ENCODE measurements at regions of chr1 and their contacts with region 1.

Region 1: GRCh38 chr1:77533660-77534305 is 148.7 kb downstream of the ZZZ3 start:
- DNase-seq: peak in 7 of 10 donors; percentile 18 to 70 (median 63)
- H3K4me3 ChIP-seq: peak overlapping the region in 9 of 59 donors; percentile 0 to 30 (median 11)
- H3K27ac ChIP-seq: peak overlapping the region; percentile 1 to 94 (median 81)
- H3K27me3 ChIP-seq: no peaks in the 10 kb centered on the region
- CTCF ChIP-seq: peak; percentile 81 to 98 (median 90)

Region 2: GRCh38 chr1:77219166-77219887 is 314.5 kb before region 1 on chr1 and contains the start of gene PIGK:
- intact Hi-C with region 1: loop called in 1 of 2 experiments (anchors 5 kb)
- DNase-seq: peak; percentile 75 to 90 (median 86)
- H3K4me3 ChIP-seq: peak within 1 kb of the TSS; percentile 54 to 97 (median 84)
- H3K27ac ChIP-seq: peak within 1 kb of the TSS; percentile 26 to 97 (median 89)
- H3K27me3 ChIP-seq: no peaks in the 10 kb centered on the region
- CTCF ChIP-seq: peak in 42 of 56 donors; percentile 3 to 54 (median 30)
- total RNA-seq, gene PIGK: 15.2 to 61.9 (median 34.6) TPM

Region 3: GRCh38 chr1:77399250-77400086 is 134.3 kb before region 1 on chr1:
- intact Hi-C with region 1: loop called in 1 of 2 experiments (anchors 5 kb)
- DNase-seq: peak in 4 of 10 donors; percentile 53 to 72 (median 62)
- H3K4me3 ChIP-seq: peak overlapping the region in 15 of 59 donors; percentile 3 to 31 (median 12)
- H3K27ac ChIP-seq: peak overlapping the region; percentile 81 to 99 (median 93)
- H3K27me3 ChIP-seq: no peaks in the 10 kb centered on the region
- CTCF ChIP-seq: peak in 1 of 56 donors; percentile 15